ENCODE measurements at regions of chr11 and their contacts with region 1.

Region 1: GRCh38 chr11:34051349-34052035 is at the start of gene CAPRIN1:
- DNase-seq: peak; percentile 91
- ATAC-seq: peak; percentile 81
- H3K4me3 Mint-ChIP-seq: peak within 1 kb of the TSS; percentile 95
- H3K27ac Mint-ChIP-seq: peak within 1 kb of the TSS; percentile 97
- H3K4me1 Mint-ChIP-seq: peaks cover 13% of the 10 kb centered on the region
- H3K27me3 Mint-ChIP-seq: peaks cover 3% of the 10 kb centered on the region
- total RNA-seq, gene CAPRIN1: 190 to 201 TPM

Region 2: DNA sequence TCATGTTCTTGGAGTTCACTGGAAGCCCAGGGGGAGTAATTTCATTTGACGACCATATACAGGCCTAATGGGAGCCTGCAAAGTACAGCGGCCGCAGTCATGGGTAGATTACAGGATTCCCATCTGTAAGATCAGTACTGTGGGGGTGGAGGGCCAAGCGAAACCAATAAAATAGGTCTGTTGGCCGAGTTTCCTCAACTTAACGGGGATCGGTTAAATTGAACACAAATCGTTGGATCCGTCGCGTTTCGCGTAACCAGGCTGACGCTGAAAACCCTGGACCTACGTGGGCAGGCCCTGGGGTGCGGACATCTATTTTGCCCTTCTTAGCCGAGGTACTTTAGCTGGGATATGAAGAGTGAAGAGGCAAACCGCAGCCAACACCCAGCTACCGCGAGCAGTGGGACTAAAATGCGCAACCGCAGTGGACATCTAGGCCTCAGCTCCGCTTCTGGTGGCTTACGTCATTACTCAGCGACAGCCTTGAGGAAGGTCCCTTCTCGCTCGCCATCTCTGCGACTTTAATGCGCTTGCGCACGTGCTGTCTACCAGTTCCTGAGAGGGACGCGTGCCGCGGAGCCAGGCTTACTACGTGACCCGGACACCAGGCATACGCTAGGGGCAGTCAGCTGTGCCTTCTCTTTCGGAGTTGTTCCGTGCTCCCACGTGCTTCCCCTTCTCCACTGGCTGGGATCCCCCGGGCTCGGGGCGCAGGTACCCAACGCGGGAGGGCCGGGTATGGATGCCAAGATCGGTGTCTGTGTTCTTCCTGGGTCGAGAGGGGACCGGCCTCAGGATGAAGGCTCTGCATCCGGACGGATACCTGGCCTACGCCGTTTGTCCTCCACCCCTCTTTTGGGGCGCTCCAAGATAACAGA is 53.8 kb after region 1 on chr11 and contains the start of gene NAT10:
- POLR2A ChIA-PET with region 1: interaction called, 47 read pairs
- DNase-seq: peak; percentile 90
- ATAC-seq: peak; percentile 95
- H3K4me3 Mint-ChIP-seq: peak within 1 kb of the TSS; percentile 95
- H3K27ac Mint-ChIP-seq: peak within 1 kb of the TSS; percentile 97
- H3K4me1 Mint-ChIP-seq: peaks cover 42% of the 10 kb centered on the region
- H3K27me3 Mint-ChIP-seq: no peaks in the 10 kb centered on the region
- total RNA-seq, gene NAT10: 72.7 to 76.3 TPM